ENCODE measurements at regions of chr5 and their contacts with region 1.

Region 1: GRCh38 chr5:159106569-159107282 is 7.0 kb upstream of the EBF1 start:
- DNase-seq: peak; percentile 88
- ATAC-seq: peak; percentile 87
- H3K4me3 Mint-ChIP-seq: peak overlapping the region; percentile 81
- H3K27ac Mint-ChIP-seq: no peak overlapping the region
- H3K4me1 Mint-ChIP-seq: peaks cover 27% of the 10 kb centered on the region
- H3K27me3 Mint-ChIP-seq: peaks cover 70% of the 10 kb centered on the region
- CTCF ChIP-seq: peak; percentile 88

Region 2: DNA sequence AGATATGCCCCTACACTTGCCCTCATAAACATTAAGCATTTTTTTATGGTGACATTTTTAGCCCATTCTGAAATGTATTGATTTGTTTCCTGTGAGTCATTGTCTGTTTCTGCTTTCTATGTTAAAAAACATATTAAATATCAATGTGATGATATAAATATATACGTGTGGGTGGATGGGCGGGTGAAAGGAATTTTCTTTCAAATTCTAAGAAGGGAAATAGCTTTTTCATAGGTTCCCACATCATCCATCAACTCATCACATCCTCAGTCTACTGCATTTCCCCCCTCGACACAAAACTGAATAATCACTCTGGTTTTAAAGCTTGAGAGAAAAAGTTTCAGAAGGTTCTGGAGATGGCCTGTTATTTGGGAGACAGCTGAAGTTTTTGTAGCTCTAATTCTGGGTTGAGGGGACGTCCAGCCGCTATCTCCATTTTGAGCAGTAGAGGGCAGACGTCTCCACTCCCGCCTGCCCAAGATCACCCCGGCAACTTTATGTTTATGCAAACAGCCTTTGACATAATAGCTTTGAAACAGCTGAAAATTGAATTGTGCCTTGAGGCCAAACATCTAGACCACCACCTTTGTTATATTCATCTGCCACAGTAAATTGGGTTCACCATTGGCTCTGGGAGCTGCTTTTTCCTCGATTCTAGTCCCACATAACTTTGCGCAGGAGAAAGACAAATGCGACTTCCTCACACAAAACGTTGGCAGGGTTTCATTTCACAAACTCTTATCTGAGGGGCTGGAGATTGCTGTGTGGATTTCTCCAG is 1031.5 kb before region 1 on chr5:
- CTCF ChIA-PET with region 1: interaction called, 25 read pairs
- POLR2A ChIA-PET with region 1: no interaction called
- DNase-seq: peak; percentile 66
- ATAC-seq: peak; percentile 87
- H3K4me3 Mint-ChIP-seq: 0 out of 2 replicates have a peak overlapping the region, but pooled peaks have one; percentile 15
- H3K27ac Mint-ChIP-seq: no peak overlapping the region
- H3K4me1 Mint-ChIP-seq: peaks cover 14% of the 10 kb centered on the region
- H3K27me3 Mint-ChIP-seq: peaks cover 3% of the 10 kb centered on the region
- CTCF ChIP-seq: peak; percentile 66

Region 3: GRCh38 chr5:158695595-158696330 is 411.0 kb before region 1 on chr5:
- CTCF ChIA-PET with region 1: interaction called, 46 read pairs
- POLR2A ChIA-PET with region 1: interaction called, 3 read pairs
- DNase-seq: peak; percentile 88
- ATAC-seq: peak; percentile 91
- H3K4me3 Mint-ChIP-seq: no peak overlapping the region
- H3K27ac Mint-ChIP-seq: no peak overlapping the region
- H3K4me1 Mint-ChIP-seq: peaks cover 52% of the 10 kb centered on the region
- H3K27me3 Mint-ChIP-seq: no peaks in the 10 kb centered on the region; the same call in 1 of the 2 replicates
- CTCF ChIP-seq: peak; percentile 96

Region 4: DNA sequence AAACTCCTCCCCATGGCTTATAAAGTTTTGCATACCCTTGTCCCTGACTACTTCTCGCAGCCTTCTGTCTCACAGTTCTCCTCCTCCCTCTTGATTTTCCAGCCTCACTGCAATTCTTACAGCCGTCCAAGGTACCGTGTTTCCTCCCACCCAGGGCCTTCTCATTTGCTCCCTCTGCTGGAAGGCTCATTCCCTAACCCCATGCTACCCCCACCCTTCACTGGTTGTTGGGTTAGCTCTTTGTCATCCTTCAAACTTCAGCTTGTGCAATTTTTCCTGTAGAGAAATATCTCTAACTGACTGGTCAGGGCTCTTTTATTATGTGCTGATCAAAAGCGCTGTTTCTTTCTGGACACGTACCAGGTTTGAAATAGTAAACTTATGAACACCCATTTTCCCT is 336.2 kb before region 1 on chr5:
- CTCF ChIA-PET with region 1: interaction called, 11 read pairs
- POLR2A ChIA-PET with region 1: no interaction called
- DNase-seq: peak; percentile 45
- ATAC-seq: peak; percentile 97
- H3K4me3 Mint-ChIP-seq: no peak overlapping the region
- H3K27ac Mint-ChIP-seq: no peak overlapping the region
- H3K4me1 Mint-ChIP-seq: peaks cover 16% of the 10 kb centered on the region
- H3K27me3 Mint-ChIP-seq: no peaks in the 10 kb centered on the region
- CTCF ChIP-seq: peak; percentile 35; the same call in 1 of the 2 replicates

Region 5: GRCh38 chr5:159133041-159133741 is 26.5 kb after region 1 on chr5:
- CTCF ChIA-PET with region 1: interaction called, 14 read pairs
- POLR2A ChIA-PET with region 1: no interaction called
- DNase-seq: no peak
- ATAC-seq: peak; percentile 20; the same call in 1 of the 2 replicates
- H3K4me3 Mint-ChIP-seq: no peak overlapping the region
- H3K27ac Mint-ChIP-seq: no peak overlapping the region
- H3K4me1 Mint-ChIP-seq: no peaks in the 10 kb centered on the region
- H3K27me3 Mint-ChIP-seq: no peaks in the 10 kb centered on the region
- CTCF ChIP-seq: peak; percentile 66